ENCODE measurements at regions of chr1 and their contacts with region 1.

Region 1: GRCh38 chr1:109041621-109042468 is at the start of gene WDR47:
- DNase-seq: peak; percentile 97
- H3K4me3 Mint-ChIP-seq: peak within 1 kb of the TSS; percentile 84
- H3K27ac Mint-ChIP-seq: peak within 1 kb of the TSS; percentile 76
- H3K4me1 Mint-ChIP-seq: peaks cover 12% of the 10 kb centered on the region
- H3K27me3 Mint-ChIP-seq: no peaks in the 10 kb centered on the region
- total RNA-seq, gene WDR47: 10.1 to 11.4 TPM

Region 2: DNA sequence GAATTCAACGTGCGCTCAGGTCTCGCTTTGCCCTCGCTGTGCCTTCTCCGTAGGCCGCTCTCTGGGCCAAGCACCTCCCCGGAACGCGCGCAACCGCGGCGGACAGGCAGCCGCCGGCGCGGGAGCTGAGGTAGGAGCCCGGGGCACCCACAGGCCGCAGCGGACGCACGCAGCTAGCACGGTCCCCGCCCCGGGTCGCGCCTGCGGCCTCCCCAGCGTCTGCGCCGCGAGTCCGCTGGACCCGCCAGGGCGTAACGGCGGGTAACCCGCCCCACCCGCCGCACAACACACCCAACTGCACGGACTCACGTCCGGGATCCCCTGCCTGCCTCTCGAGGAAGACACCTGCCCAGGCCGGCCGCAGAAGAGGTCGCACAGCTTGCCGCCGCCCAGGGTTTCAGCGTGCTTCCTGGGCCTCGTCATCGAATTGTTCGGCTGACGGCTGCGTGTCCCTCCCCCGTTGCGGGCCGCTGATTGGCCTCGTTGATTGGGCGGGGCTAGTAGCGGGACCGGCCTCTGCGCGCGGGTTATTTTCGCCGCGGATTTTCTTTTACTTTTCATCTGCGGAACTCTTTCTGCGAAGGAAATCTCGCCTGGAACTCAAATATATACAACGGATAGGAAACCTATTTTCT is 78.7 kb before region 1 on chr1 and contains the start of gene CLCC1:
- CTCF ChIA-PET with region 1: interaction called, 5 read pairs
- POLR2A ChIA-PET with region 1: interaction called, 3 read pairs
- intact Hi-C with region 1: loop called (anchors 1 kb)
- DNase-seq: peak; percentile 96
- H3K4me3 Mint-ChIP-seq: peak within 1 kb of the TSS; percentile 82
- H3K27ac Mint-ChIP-seq: peak within 1 kb of the TSS; percentile 87
- H3K4me1 Mint-ChIP-seq: peaks cover 28% of the 10 kb centered on the region
- H3K27me3 Mint-ChIP-seq: peaks cover 2% of the 10 kb centered on the region
- total RNA-seq, gene CLCC1: 17.1 to 18.6 TPM

Region 3: DNA sequence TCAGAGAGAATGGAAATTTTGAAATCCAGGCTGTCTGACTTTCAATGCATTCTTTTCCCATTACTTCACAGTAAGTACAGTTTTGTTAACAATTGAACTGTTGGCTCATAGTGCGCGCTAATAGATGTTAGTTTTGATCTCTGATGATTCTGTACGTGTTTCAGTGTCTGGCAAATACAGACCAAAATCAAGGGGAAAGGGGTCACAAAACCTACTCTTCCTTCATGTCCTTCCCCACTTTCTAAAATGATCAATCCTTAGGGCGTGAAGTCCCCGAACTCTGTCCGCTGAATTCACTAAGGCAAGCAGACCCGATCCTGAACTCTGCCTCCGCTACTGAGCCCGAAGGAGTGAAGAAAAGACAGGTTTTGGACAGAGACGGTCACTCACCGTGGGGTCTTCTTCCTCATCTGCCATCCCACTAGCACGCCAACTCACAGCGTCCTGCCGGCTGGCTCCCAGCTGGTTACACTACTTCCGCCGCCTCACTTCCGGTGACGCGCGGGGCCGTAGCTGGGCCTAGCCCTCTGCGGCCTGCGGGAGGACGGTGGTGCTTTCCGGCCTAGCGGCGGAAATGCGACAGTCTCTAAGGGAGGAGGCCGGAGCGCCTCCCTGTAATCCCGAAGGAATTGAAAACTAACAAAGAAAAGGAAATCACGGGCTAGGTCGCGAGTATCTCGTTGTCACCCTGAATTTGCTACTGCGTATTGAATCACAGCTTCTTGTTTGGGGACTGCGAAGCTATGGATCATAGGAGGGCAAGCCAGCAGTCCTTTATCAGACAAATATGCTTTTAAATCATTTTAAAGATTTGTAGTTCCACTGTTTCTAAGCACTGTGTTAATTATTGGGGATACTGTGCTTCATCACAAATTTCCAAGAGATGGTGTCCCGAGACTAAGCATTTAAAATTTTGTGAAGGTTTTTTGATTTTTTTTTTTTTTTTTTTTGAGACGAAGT is 34.0 kb after region 1 on chr1 and contains the start of gene TAF13:
- CTCF ChIA-PET with region 1: interaction called, 3 read pairs
- POLR2A ChIA-PET with region 1: interaction called, 6 read pairs
- intact Hi-C with region 1: loop called (anchors 1 kb)
- DNase-seq: peak; percentile 94
- H3K4me3 Mint-ChIP-seq: peak within 1 kb of the TSS; percentile 99
- H3K27ac Mint-ChIP-seq: peak within 1 kb of the TSS; percentile 95
- H3K4me1 Mint-ChIP-seq: peaks cover 17% of the 10 kb centered on the region
- H3K27me3 Mint-ChIP-seq: no peaks in the 10 kb centered on the region
- total RNA-seq, gene TAF13: 28.4 to 29.0 TPM

Region 4: DNA sequence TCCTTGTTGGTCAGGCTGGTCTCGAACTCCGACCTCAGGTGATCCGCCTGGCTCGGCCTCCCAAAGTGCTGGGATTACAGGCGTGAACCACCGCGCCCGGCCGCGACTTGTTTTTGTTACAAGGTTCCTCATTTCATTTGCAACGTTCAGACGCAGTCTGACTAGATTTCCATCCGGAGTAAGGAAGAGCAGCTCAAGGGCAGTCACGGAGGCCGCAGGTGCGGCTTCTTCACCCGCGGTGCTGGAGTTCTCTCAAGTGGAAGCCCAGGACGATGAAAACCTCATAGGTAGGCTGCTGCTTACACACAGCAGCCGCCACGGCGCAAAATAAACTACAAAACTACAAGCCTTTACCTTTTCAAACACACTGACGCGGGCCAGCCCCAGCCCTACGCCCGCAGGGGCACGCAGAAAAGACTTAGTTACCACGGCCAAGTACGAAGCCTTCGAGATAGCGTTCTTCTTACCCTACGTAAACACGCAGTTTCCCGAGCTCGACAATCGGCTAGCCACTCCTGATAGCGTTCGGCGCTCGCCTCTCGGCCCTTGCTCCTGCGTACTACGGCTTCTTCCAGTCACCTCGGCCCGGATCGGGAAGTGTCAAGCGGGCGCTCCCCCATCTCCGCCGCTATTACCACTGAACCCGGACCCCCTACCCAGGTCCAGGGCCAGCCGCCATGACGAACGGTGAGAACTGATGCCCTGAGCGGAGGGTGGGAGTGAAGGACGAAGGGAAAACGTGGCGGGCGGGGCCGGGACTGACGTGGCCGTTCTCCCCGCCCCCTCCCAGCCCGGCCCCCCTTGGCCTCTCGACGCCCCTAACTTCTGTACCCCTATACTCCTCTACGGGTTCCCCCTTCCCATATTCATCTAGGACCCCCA is 48.6 kb after region 1 on chr1 and contains the start of gene TMEM167B:
- CTCF ChIA-PET with region 1: no interaction called
- POLR2A ChIA-PET with region 1: interaction called, 6 read pairs
- intact Hi-C with region 1: loop called (anchors 2 kb)
- DNase-seq: peak; percentile 94
- H3K4me3 Mint-ChIP-seq: peak within 1 kb of the TSS; percentile 88
- H3K27ac Mint-ChIP-seq: peak within 1 kb of the TSS; percentile 92
- H3K4me1 Mint-ChIP-seq: peaks cover 28% of the 10 kb centered on the region
- H3K27me3 Mint-ChIP-seq: no peaks in the 10 kb centered on the region
- total RNA-seq, gene TMEM167B: 31.9 to 32.6 TPM

Region 5: GRCh38 chr1:109099938-109100773 is 58.3 kb after region 1 on chr1:
- CTCF ChIA-PET with region 1: interaction called, 6 read pairs
- POLR2A ChIA-PET with region 1: interaction called, 12 read pairs
- intact Hi-C with region 1: loop called (anchors 1 kb)
- DNase-seq: peak; percentile 98
- H3K4me3 Mint-ChIP-seq: peak overlapping the region; percentile 98
- H3K27ac Mint-ChIP-seq: peak overlapping the region; percentile 99
- H3K4me1 Mint-ChIP-seq: peaks cover 14% of the 10 kb centered on the region
- H3K27me3 Mint-ChIP-seq: peaks cover 3% of the 10 kb centered on the region

Region 6: DNA sequence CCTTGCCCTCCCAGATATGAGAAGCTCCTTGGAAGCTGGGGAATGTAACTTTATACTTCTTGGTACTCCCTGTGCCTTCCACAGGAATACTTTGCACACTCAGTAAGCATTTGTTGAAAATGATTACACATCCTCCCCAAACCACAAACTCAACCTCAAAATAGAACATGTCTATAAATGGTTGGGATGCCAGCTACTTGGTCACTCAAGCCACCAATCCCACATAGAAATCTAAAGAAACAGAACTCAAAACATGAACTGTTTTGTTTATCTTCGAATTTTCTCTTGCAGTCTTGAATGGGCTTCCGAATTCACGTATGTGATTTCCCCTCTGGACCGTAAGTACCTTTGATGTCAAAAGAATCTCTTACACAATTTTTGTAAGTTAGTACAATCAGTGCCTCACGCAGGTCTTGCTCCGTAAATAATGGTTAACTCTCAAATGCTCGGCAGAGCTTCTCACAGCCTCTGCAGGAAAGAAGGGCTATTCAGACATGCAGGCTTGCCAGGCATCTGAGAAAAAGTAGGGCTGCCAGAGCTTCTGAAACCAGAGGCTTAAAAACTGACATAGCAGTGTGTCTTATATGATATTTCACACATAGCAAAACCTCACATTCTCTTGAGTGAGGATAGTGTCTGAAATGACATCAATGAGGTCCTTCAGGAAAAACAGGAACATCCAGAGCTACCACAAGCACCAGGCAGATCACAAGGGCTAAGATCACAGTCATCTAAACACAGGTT is 329.0 kb after region 1 on chr1:
- CTCF ChIA-PET with region 1: no interaction called
- POLR2A ChIA-PET with region 1: no interaction called
- intact Hi-C with region 1: no loop called
- DNase-seq: no peak
- H3K4me3 Mint-ChIP-seq: no peak overlapping the region
- H3K27ac Mint-ChIP-seq: no peak overlapping the region
- H3K4me1 Mint-ChIP-seq: peaks cover 20% of the 10 kb centered on the region
- H3K27me3 Mint-ChIP-seq: peaks cover 22% of the 10 kb centered on the region